ENCODE measurements at regions of chr10 and their contacts with region 1.

Region 1: DNA sequence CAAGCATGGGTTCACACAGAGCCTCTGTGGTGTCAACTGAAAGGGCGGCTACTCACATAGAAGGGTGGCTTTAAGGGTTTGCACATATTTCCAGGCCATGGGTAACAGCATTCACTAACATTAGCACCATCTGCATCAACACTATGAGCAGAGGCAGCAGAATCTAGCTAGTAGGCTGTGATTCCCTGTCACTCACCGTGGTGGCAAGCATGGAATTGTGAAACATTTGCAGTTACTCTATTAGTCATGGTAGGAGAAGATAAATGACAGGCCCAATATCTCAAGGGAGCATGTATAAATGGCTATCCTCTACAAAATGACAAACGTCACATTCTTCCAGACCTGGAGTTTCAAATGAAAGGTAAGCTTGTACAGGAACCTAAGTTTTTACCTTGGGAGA is 32.2 kb upstream of the CUBN start:
- DNase-seq: no peak
- H3K4me3 ChIP-seq: no peak overlapping the region
- H3K27ac ChIP-seq: no peak overlapping the region
- H3K4me1 ChIP-seq: no peaks in the 10 kb centered on the region
- H3K27me3 ChIP-seq: no peaks in the 10 kb centered on the region
- CTCF ChIP-seq: no peak
- EP300 ChIP-seq: no peak
- POLR2A ChIP-seq: no peak

Region 2: DNA sequence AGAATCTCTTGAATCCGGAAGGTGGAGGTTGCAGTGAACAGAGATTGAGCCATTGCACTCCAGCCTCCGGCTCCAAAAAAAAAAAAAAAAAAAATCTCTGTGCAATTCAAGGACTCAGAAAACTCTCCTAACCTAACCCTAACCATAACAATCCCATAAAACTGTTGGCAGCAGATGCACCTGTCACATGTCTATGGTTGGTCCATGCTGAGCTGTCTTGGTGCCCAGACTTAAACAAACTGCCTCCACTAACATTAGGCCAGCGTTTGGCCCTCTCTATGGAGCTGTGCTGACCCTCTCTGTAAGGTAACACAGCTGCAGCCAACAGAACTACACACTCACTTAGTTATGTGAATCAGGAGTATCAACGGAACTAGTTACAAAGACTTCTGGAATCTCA is 857.5 kb before region 1 on chr10:
- in situ Hi-C with region 1: no loop called
- intact Hi-C with region 1: no loop called
- DNase-seq: peak; percentile 8
- H3K4me3 ChIP-seq: no peak overlapping the region
- H3K27ac ChIP-seq: no peak overlapping the region
- H3K4me1 ChIP-seq: no peaks in the 10 kb centered on the region
- H3K27me3 ChIP-seq: no peaks in the 10 kb centered on the region
- CTCF ChIP-seq: no peak
- EP300 ChIP-seq: no peak
- POLR2A ChIP-seq: no peak

Region 3: DNA sequence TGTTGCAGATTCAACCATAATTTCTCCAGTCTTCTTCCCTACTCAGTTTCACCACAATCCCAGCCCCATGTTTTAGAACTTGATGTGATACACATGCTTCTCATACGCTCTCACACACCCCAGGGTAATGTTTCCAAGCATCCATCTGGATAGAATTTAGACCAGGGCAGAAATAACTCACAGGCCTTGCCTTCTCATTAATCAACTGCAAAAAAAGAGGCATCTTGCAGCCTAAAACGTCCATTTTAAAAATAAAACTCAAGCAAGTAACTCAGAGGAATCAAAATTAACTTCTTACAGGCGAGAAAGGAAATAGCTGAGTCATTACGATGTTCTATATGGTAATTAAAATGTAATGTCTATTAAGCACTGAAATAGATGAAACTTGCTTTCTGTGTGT is 217.4 kb before region 1 on chr10:
- in situ Hi-C with region 1: no loop called
- intact Hi-C with region 1: no loop called
- DNase-seq: no peak
- H3K4me3 ChIP-seq: no peak overlapping the region
- H3K27ac ChIP-seq: peak overlapping the region; percentile 6 to 36 (median 19)
- H3K4me1 ChIP-seq: peaks cover 0 to 7% (median 0%) of the 10 kb centered on the region in 4 donors
- H3K27me3 ChIP-seq: no peaks in the 10 kb centered on the region
- CTCF ChIP-seq: no peak
- EP300 ChIP-seq: no peak
- POLR2A ChIP-seq: no peak

Region 4: DNA sequence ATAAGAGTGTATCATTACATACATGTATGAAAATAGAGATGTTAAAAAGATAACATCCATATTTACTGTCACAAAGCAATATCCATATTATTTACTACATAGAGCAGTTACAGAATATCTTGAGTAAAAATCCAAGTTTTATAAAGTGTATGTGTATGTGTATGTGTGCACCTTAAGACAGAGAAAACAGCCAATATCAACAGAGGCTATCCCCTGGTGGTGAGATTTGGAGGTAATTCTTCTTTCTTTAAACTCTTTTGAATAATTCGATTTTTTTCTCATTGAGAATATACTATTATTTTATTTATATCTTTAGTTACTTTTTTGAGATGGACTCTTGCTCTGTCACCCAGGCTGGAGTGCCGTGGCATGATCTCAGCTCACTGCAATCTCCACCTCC is 21.3 kb after region 1 on chr10:
- in situ Hi-C with region 1: no loop called
- intact Hi-C with region 1: loop called (anchors 1 kb)
- DNase-seq: no peak
- H3K4me3 ChIP-seq: no peak overlapping the region
- H3K27ac ChIP-seq: no peak overlapping the region
- H3K4me1 ChIP-seq: no peaks in the 10 kb centered on the region
- H3K27me3 ChIP-seq: no peaks in the 10 kb centered on the region
- CTCF ChIP-seq: peak in 1 of 5 experiments; percentile 8
- EP300 ChIP-seq: no peak
- POLR2A ChIP-seq: no peak

Region 5: DNA sequence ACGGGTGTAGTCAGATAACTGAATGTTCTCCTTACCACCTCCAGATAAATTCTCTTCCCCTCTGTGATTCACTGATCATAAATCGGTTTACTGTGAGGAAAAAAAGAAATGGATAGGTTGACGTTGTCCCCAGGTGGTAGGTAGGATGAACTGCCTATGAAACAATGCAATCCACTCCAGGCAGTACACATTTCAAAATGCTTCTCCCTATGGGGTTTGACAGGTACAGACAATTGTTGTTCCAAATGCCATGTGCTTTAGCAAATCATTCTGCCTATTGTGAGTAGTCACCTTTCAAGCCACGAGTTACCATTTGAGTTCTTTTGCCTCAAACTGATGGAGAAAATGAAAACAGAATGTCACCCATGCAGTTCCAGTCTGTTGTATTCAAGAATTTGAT is 88.0 kb after region 1 on chr10:
- in situ Hi-C with region 1: no loop called
- intact Hi-C with region 1: no loop called
- DNase-seq: no peak
- H3K4me3 ChIP-seq: no peak overlapping the region
- H3K27ac ChIP-seq: no peak overlapping the region
- H3K4me1 ChIP-seq: no peaks in the 10 kb centered on the region
- H3K27me3 ChIP-seq: no peaks in the 10 kb centered on the region
- CTCF ChIP-seq: peak in 2 of 5 experiments; percentile 23 to 42
- EP300 ChIP-seq: no peak
- POLR2A ChIP-seq: no peak